K562 (cell line): ENCODE measurements at regions of chr7 and their contacts with region 1.

Region 1: GRCh38 chr7:121366852-121367431 is 29.2 kb downstream of the FAM3C start:
- DNase-seq: peak; percentile 43 to 60 (median 51)
- ATAC-seq: peak; percentile 77
- H3K4me3 ChIP-seq: no peak overlapping the region
- H3K27ac ChIP-seq: no peak overlapping the region
- H3K4me1 ChIP-seq: no peaks in the 10 kb centered on the region
- H3K27me3 ChIP-seq: no peaks in the 10 kb centered on the region
- CTCF ChIP-seq: peak; percentile 64 to 95 (median 74); a peak in 5 of 6 replicates
- EP300 ChIP-seq: no peak
- POLR2A ChIP-seq: no peak
- RAD21 ChIP-seq: peak; percentile 96 to 97

Region 2: DNA sequence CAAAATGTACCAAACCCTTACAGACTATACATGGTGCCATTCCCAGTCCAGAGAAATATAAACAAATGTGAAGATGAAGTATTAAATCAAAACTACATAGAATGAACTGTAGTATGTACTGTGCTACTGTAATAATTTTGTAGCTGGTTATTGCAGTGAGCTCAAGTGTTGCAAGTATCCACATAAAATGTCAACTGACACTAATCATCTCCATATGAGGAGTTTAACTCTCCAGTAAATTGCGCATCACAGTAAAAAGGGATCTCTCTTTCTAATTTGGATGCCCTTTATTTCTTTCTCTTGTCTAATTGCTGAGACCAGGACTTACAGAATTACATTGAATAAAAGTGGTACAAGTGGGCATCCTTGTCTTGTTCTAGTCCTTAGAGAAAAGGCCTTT is 212.9 kb before region 1 on chr7:
- CTCF ChIA-PET with region 1: no interaction called
- POLR2A ChIA-PET with region 1: no interaction called
- in situ Hi-C with region 1: no loop called
- intact Hi-C with region 1: no loop called
- DNase-seq: no peak
- ATAC-seq: no peak
- H3K4me3 ChIP-seq: no peak overlapping the region
- H3K27ac ChIP-seq: no peak overlapping the region
- H3K4me1 ChIP-seq: no peaks in the 10 kb centered on the region; a peak in 1 of 5 replicates
- H3K27me3 ChIP-seq: no peaks in the 10 kb centered on the region
- CTCF ChIP-seq: no peak
- EP300 ChIP-seq: no peak
- POLR2A ChIP-seq: no peak
- RAD21 ChIP-seq: no peak

Region 3: GRCh38 chr7:121437456-121438127 is 70.7 kb after region 1 on chr7:
- CTCF ChIA-PET with region 1: no interaction called
- POLR2A ChIA-PET with region 1: no interaction called
- in situ Hi-C with region 1: no loop called
- intact Hi-C with region 1: loop called (anchors 2 kb)
- DNase-seq: no peak
- ATAC-seq: peak; percentile 10
- H3K4me3 ChIP-seq: no peak overlapping the region
- H3K27ac ChIP-seq: peak overlapping the region; percentile 4; the same call in 1 of the 3 replicates
- H3K4me1 ChIP-seq: peaks cover 11 to 14% of the 10 kb centered on the region in 2 experiments; a peak in 4 of 5 replicates
- H3K27me3 ChIP-seq: no peaks in the 10 kb centered on the region
- CTCF ChIP-seq: no peak
- EP300 ChIP-seq: no peak
- POLR2A ChIP-seq: no peak
- RAD21 ChIP-seq: no peak

Region 4: DNA sequence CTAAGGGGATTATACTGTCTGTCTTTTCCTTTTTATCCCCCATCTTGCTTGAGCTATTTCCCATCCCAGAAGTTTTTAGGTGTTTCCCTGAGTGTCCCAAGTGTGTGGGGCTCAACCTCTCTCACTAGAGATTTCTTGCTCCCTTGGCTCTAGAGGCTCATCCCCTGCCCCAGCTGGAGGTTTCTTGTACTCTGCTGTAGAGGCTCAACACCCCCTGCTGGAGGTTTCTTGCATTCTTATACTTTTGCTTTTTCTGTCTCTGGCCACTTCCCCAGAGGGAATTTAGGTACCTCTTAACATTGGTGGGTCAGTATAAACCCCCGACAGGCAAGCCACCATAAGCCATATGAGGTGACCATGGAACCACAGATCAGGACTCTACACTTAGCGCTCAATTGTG is 143.4 kb after region 1 on chr7:
- CTCF ChIA-PET with region 1: interaction called, 4 read pairs
- POLR2A ChIA-PET with region 1: no interaction called
- in situ Hi-C with region 1: no loop called
- intact Hi-C with region 1: loop called (anchors 1 kb)
- DNase-seq: peak; percentile 34 to 45 (median 38)
- ATAC-seq: peak; percentile 84
- H3K4me3 ChIP-seq: no peak overlapping the region
- H3K27ac ChIP-seq: no peak overlapping the region
- H3K4me1 ChIP-seq: no peaks in the 10 kb centered on the region
- H3K27me3 ChIP-seq: no peaks in the 10 kb centered on the region
- CTCF ChIP-seq: peak; percentile 39 to 57 (median 56); a peak in 4 of 6 replicates
- EP300 ChIP-seq: no peak
- POLR2A ChIP-seq: no peak
- RAD21 ChIP-seq: peak; percentile 11 to 62; a peak in 2 of 4 replicates

Region 5: GRCh38 chr7:121547544-121548092 is 180.7 kb after region 1 on chr7:
- CTCF ChIA-PET with region 1: interaction called, 104 read pairs
- POLR2A ChIA-PET with region 1: interaction called, 3 read pairs
- in situ Hi-C with region 1: loop called (anchors 5 kb)
- intact Hi-C with region 1: loop called (anchors 1 kb)
- DNase-seq: peak; percentile 62 to 77 (median 72)
- ATAC-seq: peak; percentile 95
- H3K4me3 ChIP-seq: no peak overlapping the region
- H3K27ac ChIP-seq: no peak overlapping the region
- H3K4me1 ChIP-seq: no peaks in the 10 kb centered on the region
- H3K27me3 ChIP-seq: no peaks in the 10 kb centered on the region
- CTCF ChIP-seq: peak; percentile 70 to 95 (median 77)
- EP300 ChIP-seq: no peak
- POLR2A ChIP-seq: no peak
- RAD21 ChIP-seq: peak; percentile 99 to 100